ENCODE measurements at regions of chr17 and their contacts with region 1.

Region 1: GRCh38 chr17:47708863-47709541 is 15.0 kb downstream of the TBKBP1 start:
- DNase-seq: peak in 2 of 3 donors; percentile 39 to 54
- ATAC-seq: peak; percentile 62 to 85 (median 70)
- H3K4me3 ChIP-seq: peak overlapping the region in 1 of 3 donors; percentile 46
- H3K27ac ChIP-seq: no peak overlapping the region
- H3K4me1 ChIP-seq: peaks cover 0 to 11% (median 0%) of the 10 kb centered on the region in 4 donors
- H3K27me3 ChIP-seq: no peaks in the 10 kb centered on the region
- CTCF ChIP-seq: no peak
- POLR2A ChIP-seq: no peak

Region 2: DNA sequence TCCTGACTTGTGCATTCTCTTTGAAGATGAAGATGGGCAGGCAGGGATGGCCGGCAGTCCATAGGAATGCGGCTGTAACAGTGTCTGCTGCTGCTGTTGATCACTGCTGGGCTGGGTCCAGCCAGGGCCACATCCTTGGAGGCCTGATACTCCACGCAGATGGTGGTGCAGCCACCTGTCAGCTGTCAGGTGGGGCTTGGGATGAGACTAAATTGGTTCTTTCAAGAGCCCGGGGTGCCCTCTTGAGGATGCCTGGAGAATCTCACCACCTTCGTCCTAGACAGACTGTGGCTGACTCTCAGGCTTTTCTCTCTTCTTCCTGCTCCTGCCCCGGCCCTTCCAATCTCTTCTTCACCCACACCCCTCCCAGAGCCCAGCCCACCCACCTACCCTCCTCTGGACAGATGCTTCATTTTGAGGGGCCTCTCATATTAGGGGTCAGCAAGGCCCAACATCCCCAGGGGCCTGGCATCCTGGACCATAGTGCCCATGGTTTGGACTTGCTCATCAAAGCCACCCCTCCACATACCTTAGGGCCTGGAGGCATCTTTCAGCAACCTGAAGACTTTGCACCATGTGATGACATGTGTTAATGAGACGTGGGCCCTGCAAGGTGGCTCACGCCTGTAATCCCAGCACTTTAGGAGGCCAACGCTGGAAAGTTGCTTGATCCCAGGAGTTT is 93.5 kb after region 1 on chr17:
- intact Hi-C with region 1: loop called in 1 of 2 experiments (anchors 10 kb)
- DNase-seq: peak in 1 of 3 donors; percentile 50
- ATAC-seq: peak; percentile 79 to 89 (median 85)
- H3K4me3 ChIP-seq: no peak overlapping the region
- H3K27ac ChIP-seq: no peak overlapping the region
- H3K4me1 ChIP-seq: no peaks in the 10 kb centered on the region
- H3K27me3 ChIP-seq: no peaks in the 10 kb centered on the region
- CTCF ChIP-seq: peak; percentile 41 to 61 (median 54)
- POLR2A ChIP-seq: no peak

Measured in right lobe of liver (tissue), 6 donors.